Activated B cell treated with CpG ODN at 0.5 μM for 24 hours (primary cell): ENCODE measurements at regions of chr22 and their contacts with region 1.

Region 1: GRCh38 chr22:22348127-22348814 is 103.7 kb downstream of the VPREB1 start:
- DNase-seq: no peak
- ATAC-seq: no peak
- H3K4me3 Mint-ChIP-seq: no peak overlapping the region
- H3K27ac Mint-ChIP-seq: no peak overlapping the region
- H3K4me1 Mint-ChIP-seq: peaks cover 42% of the 10 kb centered on the region
- H3K27me3 Mint-ChIP-seq: no peaks in the 10 kb centered on the region
- CTCF ChIP-seq: no peak

Region 2: DNA sequence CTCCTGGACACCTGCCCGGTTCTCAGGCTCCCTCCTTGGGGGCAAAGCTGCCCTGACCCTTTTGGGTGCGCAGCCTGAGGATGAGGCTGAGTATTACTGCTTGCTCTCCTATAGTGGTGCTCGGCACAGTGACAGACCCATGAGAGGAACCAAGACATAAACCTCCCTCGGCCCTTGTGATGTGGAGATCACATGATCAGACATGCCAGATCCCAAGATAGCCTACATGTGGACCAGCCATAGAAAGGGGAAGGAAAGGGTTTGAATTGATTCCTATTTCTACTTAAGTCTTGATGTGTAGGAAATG is 21.6 kb after region 1 on chr22:
- CTCF ChIA-PET with region 1: interaction called, 3 read pairs
- POLR2A ChIA-PET with region 1: no interaction called
- intact Hi-C with region 1: loop called (anchors 1 kb)
- DNase-seq: no peak
- ATAC-seq: peak; percentile 28
- H3K4me3 Mint-ChIP-seq: peak overlapping the region; percentile 65
- H3K27ac Mint-ChIP-seq: peak overlapping the region; percentile 73
- H3K4me1 Mint-ChIP-seq: peaks cover 86% of the 10 kb centered on the region
- H3K27me3 Mint-ChIP-seq: no peaks in the 10 kb centered on the region
- CTCF ChIP-seq: no peak

Region 3: GRCh38 chr22:22380098-22381030 is 32.1 kb after region 1 on chr22:
- CTCF ChIA-PET with region 1: no interaction called
- POLR2A ChIA-PET with region 1: interaction called, 5 read pairs
- intact Hi-C with region 1: loop called (anchors 1 kb)
- DNase-seq: peak; percentile 46
- ATAC-seq: peak; percentile 80
- H3K4me3 Mint-ChIP-seq: peak overlapping the region; percentile 61
- H3K27ac Mint-ChIP-seq: peak overlapping the region; percentile 86
- H3K4me1 Mint-ChIP-seq: peaks cover 79% of the 10 kb centered on the region
- H3K27me3 Mint-ChIP-seq: no peaks in the 10 kb centered on the region
- CTCF ChIP-seq: no peak